ENCODE measurements at regions of chr10 and their contacts with region 1.

Region 1: DNA sequence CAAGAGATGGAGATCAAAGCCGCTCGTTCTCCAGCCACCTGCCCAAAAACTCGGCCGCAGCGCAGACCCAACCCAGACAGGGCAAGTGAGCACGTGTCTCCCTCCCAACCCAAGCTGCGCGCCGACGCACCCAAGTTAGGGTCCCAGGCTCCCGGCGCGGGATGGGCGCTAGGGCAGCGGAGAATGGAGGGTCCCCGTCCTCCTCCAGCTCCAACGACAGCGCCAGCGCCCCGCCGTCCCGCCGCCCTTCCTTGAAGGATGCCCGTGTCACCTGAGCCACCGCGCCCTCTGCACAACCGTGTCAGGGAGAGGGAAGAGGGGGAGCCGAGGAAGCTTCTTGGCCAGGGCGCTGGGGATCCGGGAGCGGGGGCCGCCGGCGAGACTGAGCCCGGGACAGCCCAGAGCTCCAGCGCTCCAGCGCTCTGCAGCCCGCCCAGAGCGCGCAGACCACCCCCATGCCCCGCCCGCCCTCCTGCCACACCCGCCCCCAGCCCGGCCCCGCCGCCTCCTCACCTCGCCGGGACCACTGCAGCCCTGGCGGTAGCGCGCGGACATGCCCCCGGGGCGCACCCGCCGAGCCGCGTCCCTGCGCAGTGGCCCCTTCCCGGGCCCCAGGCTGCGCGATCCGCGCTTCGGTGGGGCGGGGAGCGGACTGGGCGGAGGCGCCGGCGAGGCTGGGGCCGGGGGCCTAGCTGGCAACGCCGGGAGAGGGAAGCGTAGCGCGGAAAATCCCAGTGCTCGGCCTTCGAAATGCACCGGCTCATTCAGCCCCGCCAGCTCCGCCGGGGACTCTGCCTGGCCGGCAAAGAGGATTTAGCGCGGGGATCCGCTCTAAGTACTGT is at the start of gene SLC16A12:
- DNase-seq: peak; percentile 43 to 84 (median 56)
- ATAC-seq: peak; percentile 69 to 79 (median 70)
- H3K4me3 ChIP-seq: peak within 1 kb of the TSS; percentile 35 to 62 (median 40)
- H3K27ac ChIP-seq: peak within 1 kb of the TSS in 3 of 4 donors; percentile 63 to 87 (median 80)
- H3K4me1 ChIP-seq: no peaks in the 10 kb centered on the region
- H3K27me3 ChIP-seq: no peaks in the 10 kb centered on the region
- CTCF ChIP-seq: peak in 1 of 4 donors; percentile 21
- total RNA-seq, gene SLC16A12: 12.8 to 38.2 (median 28.4) TPM

Region 2: DNA sequence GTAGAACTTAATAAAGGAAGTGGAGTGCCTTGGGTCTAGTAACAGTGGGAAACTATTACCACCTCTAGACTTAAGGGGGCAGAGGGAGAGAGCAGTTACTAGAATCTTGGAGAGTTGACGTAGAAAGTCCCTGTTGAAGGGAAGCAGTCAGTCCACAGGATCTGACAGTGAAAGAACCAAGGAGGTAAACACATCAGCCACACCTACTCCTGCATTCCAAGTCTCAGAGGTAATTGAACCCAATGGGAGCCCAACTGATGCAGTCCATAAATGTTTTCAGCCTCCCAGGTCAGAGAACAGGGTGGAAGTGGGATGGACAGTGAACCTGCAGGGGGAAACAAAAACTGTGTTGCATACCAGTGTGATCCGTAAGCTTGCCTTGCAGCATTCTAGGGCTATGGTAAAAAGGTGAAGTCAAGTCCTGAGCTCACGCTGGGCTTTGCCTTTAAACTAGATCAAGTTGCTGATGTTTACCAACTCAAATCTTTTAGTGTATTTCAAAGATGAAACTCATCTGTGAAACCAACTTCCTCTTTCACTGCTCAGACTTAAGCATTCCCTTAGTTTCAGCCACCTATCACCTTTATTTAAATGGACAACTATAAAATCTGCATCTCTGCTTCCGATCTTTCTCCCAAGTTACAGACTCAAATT is 57.2 kb before region 1 on chr10:
- intact Hi-C with region 1: loop called in 1 of 3 experiments (anchors 10 kb)
- DNase-seq: no peak
- ATAC-seq: peak in 1 of 4 donors; percentile 35
- H3K4me3 ChIP-seq: no peak overlapping the region
- H3K27ac ChIP-seq: peak overlapping the region in 2 of 4 donors; percentile 50 to 59
- H3K4me1 ChIP-seq: peaks cover 9 to 67% (median 63%) of the 10 kb centered on the region in 3 donors
- H3K27me3 ChIP-seq: no peaks in the 10 kb centered on the region
- CTCF ChIP-seq: no peak

Measured in pancreas (tissue), 10 donors.